Activated naive CD4-positive, alpha-beta T cell treated with anti-CD3 and anti-CD28 coated beads for 36 hours (primary cell): ENCODE measurements at regions of chr10 and their contacts with region 1.

Region 1: GRCh38 chr10:103367782-103368518 is at the start of gene TAF5:
- DNase-seq: peak; percentile 95
- H3K4me3 Mint-ChIP-seq: peak within 1 kb of the TSS; percentile 85
- H3K27ac Mint-ChIP-seq: peak within 1 kb of the TSS; percentile 87
- H3K4me1 Mint-ChIP-seq: peaks cover 18% of the 10 kb centered on the region
- H3K27me3 Mint-ChIP-seq: no peaks in the 10 kb centered on the region
- total RNA-seq, gene TAF5: 16.3 TPM

Region 2: GRCh38 chr10:102743588-102744373 is 624.2 kb before region 1 on chr10 and contains the start of gene WBP1L:
- CTCF ChIA-PET with region 1: no interaction called
- intact Hi-C with region 1: loop called (anchors 1 kb)
- DNase-seq: peak; percentile 97
- H3K4me3 Mint-ChIP-seq: peak within 1 kb of the TSS; percentile 90
- H3K27ac Mint-ChIP-seq: peak within 1 kb of the TSS; percentile 83
- H3K4me1 Mint-ChIP-seq: peaks cover 43% of the 10 kb centered on the region
- H3K27me3 Mint-ChIP-seq: no peaks in the 10 kb centered on the region
- total RNA-seq, gene WBP1L: 10.5 to 11.8 TPM

Region 3: DNA sequence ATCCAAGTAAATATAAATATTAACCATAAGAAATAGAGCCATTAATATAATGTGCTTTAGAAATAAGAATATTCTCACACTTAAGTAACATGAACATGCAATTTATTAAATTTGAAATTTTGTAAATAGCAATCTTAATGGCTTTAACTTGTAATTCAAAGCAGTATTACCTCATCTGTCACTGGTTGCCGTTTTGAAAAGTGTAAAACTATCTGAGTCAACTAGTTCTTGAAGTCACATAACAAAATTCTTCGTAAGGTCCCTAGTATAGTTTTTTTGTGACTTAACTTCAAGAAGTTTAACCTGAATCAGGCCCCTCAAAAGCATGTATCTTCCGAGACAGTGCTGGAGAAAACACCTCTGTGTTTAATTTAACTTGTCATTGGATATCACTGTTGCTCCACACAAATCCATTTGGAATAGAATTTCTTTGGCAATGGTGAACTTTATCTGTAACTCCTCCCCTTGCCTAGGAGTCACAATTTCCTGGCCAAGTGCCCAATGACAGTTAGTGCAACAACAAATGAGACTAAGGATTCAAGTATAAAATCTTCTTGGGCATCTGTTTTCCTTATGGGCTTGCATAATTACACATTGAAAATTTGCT is 222.0 kb before region 1 on chr10:
- CTCF ChIA-PET with region 1: no interaction called
- intact Hi-C with region 1: no loop called
- DNase-seq: peak; percentile 60
- H3K4me3 Mint-ChIP-seq: no peak overlapping the region
- H3K27ac Mint-ChIP-seq: no peak overlapping the region
- H3K4me1 Mint-ChIP-seq: peaks cover 8% of the 10 kb centered on the region
- H3K27me3 Mint-ChIP-seq: no peaks in the 10 kb centered on the region

Region 4: DNA sequence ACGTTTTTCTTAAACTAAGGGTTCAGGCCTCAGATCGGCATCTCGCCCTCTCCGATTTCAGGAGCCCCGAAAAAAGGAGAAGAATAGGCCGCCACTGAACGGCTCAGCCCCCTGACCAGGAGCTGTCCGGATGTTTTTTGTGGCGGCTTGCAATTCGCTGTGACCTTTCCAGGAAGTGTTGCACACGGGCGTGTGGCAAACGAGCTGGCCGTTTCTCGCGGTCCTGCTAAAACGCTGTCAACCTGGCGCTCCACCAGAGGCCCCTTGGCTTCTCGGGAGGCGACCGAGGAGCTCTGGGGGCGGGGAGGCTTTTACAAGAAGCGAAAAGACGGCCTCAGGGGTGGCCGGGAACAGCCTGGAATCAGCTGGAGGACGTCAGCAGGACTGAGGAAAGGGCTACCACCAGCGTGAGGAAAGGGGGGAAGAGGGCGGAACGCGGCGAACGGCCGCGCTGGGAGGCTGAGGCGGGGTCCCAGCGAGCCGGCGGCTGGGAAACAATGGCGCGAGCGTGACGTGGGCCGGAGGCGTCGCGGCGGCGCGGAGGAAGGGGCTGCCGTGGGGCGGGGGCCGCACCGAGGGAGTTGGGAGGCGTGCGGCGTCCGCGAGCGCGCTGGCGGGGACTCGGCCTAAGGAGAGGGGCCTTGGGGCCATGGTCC is 175.4 kb before region 1 on chr10:
- CTCF ChIA-PET with region 1: no interaction called
- intact Hi-C with region 1: loop called (anchors 5 kb)
- DNase-seq: peak; percentile 78
- H3K4me3 Mint-ChIP-seq: peak overlapping the region; percentile 87
- H3K27ac Mint-ChIP-seq: peak overlapping the region; percentile 96
- H3K4me1 Mint-ChIP-seq: peaks cover 39% of the 10 kb centered on the region
- H3K27me3 Mint-ChIP-seq: no peaks in the 10 kb centered on the region

Region 5: GRCh38 chr10:103396064-103396788 is 28.3 kb after region 1 on chr10 and contains the starts of genes ATP5MK and PDCD11:
- CTCF ChIA-PET with region 1: no interaction called
- intact Hi-C with region 1: loop called (anchors 1 kb)
- DNase-seq: peak; percentile 99
- H3K4me3 Mint-ChIP-seq: peak within 1 kb of the TSS; percentile 97
- H3K27ac Mint-ChIP-seq: peak within 1 kb of the TSS; percentile 85
- H3K4me1 Mint-ChIP-seq: peaks cover 69% of the 10 kb centered on the region
- H3K27me3 Mint-ChIP-seq: no peaks in the 10 kb centered on the region
- total RNA-seq, gene ATP5MK: 422 to 423 TPM
- total RNA-seq, gene PDCD11: 50.1 TPM